BJ (cell line): ENCODE measurements at regions of chr3 and their contacts with region 1.

Region 1: GRCh38 chr3:36989005-36989404 is 3.9 kb downstream of the EPM2AIP1 start:
- DNase-seq: no peak
- H3K4me3 ChIP-seq: no peak overlapping the region
- H3K27me3 ChIP-seq: no peaks in the 10 kb centered on the region
- CTCF ChIP-seq: no peak

Region 2: DNA sequence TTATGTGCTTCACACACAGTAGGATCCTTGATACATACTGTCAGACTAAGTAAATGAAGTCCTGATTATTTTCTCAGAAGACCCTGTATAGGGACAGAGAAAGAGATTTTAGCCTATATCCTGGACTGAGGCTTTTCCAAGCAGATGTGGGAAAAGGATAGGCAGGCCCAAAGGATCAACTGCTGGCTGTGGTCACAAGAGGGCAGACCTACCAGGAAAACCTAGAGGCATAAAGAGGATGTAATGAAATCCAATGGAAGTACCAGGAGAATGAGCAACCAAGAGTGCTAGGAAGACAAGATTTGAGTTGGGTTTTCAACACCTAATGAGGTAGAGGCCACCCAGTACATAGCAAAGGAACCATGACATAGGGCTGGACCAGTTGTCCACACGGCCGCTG is 247.7 kb before region 1 on chr3:
- CTCF ChIA-PET with region 1: no interaction called
- POLR2A ChIA-PET with region 1: no interaction called
- DNase-seq: no peak
- H3K4me3 ChIP-seq: no peak overlapping the region
- H3K27me3 ChIP-seq: peaks cover 3% of the 10 kb centered on the region
- CTCF ChIP-seq: peak; percentile 37; the same call in 1 of the 2 replicates

Region 3: GRCh38 chr3:38837358-38837757 is 1848.4 kb after region 1 on chr3:
- CTCF ChIA-PET with region 1: no interaction called
- POLR2A ChIA-PET with region 1: interaction called, 11 read pairs
- DNase-seq: no peak
- H3K4me3 ChIP-seq: no peak overlapping the region
- H3K27me3 ChIP-seq: no peaks in the 10 kb centered on the region; the same call in 1 of the 2 replicates
- CTCF ChIP-seq: no peak